Naive thymus-derived CD4-positive, alpha-beta T cell (primary cell): ENCODE measurements at regions of chr6 and their contacts with region 1.

Region 1: GRCh38 chr6:127775371-127775770 is 125.5 kb downstream of the THEMIS start:
- DNase-seq: no peak
- ATAC-seq: no peak
- H3K4me3 ChIP-seq: no peak overlapping the region
- H3K4me3 Mint-ChIP-seq: no peak overlapping the region
- H3K27ac ChIP-seq: no peak overlapping the region
- H3K27ac Mint-ChIP-seq: peak overlapping the region in 4 of 9 donors; percentile 55 to 66 (median 64)
- H3K4me1 ChIP-seq: peaks cover 0 to 8% of the 10 kb centered on the region in 2 donors
- H3K4me1 Mint-ChIP-seq: peaks cover 17 to 70% (median 52%) of the 10 kb centered on the region in 7 donors
- H3K27me3 ChIP-seq: no peaks in the 10 kb centered on the region
- H3K27me3 Mint-ChIP-seq: no peaks in the 10 kb centered on the region

Region 2: GRCh38 chr6:127762284-127762683 is 13.1 kb before region 1 on chr6:
- CTCF ChIA-PET with region 1: no interaction called
- POLR2A ChIA-PET with region 1: no interaction called
- intact Hi-C with region 1: loop called in 1 of 2 experiments (anchors 2 kb)
- DNase-seq: peak in 3 of 9 donors; percentile 9 to 19 (median 12)
- ATAC-seq: no peak
- H3K4me3 ChIP-seq: no peak overlapping the region
- H3K4me3 Mint-ChIP-seq: peak overlapping the region in 4 of 10 donors; percentile 20 to 52 (median 33)
- H3K27ac ChIP-seq: no peak overlapping the region
- H3K27ac Mint-ChIP-seq: peak overlapping the region in 7 of 9 donors; percentile 12 to 76 (median 46)
- H3K4me1 ChIP-seq: peaks cover 12 to 22% of the 10 kb centered on the region in 2 donors
- H3K4me1 Mint-ChIP-seq: peaks cover 23 to 71% (median 64%) of the 10 kb centered on the region in 7 donors
- H3K27me3 ChIP-seq: no peaks in the 10 kb centered on the region
- H3K27me3 Mint-ChIP-seq: no peaks in the 10 kb centered on the region

Region 3: DNA sequence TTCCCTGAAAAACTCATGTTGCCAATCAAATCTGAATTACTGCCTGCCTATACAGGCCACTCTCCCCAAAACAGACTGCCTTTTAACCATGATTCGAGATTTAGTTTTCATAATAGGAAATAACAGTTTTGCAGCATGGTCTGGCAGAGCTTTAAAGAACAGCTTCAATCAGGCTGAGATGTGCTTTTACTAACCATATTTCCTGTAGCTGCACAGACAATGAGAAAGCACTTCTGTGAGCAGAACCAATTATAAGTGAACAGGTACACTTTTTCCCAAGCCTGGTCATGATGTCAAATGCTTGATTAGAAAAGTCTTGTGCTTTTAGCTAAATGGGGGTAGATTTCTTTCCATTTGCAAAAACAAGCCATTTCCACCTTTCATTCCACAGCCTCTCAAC is 17.2 kb after region 1 on chr6:
- CTCF ChIA-PET with region 1: interaction called, 3 read pairs
- POLR2A ChIA-PET with region 1: interaction called, 4 read pairs
- intact Hi-C with region 1: loop called in 1 of 2 experiments (anchors 2 kb)
- DNase-seq: peak in 7 of 9 donors; percentile 44 to 70 (median 60)
- ATAC-seq: peak; percentile 83
- H3K4me3 ChIP-seq: peak overlapping the region; percentile 3
- H3K4me3 Mint-ChIP-seq: peak overlapping the region in 8 of 10 donors; percentile 14 to 80 (median 54)
- H3K27ac ChIP-seq: peak overlapping the region; percentile 43
- H3K27ac Mint-ChIP-seq: peak overlapping the region in 8 of 9 donors; percentile 22 to 90 (median 78)
- H3K4me1 ChIP-seq: peaks cover 34 to 43% of the 10 kb centered on the region in 2 donors
- H3K4me1 Mint-ChIP-seq: peaks cover 45 to 100% (median 92%) of the 10 kb centered on the region in 7 donors
- H3K27me3 ChIP-seq: no peaks in the 10 kb centered on the region
- H3K27me3 Mint-ChIP-seq: no peaks in the 10 kb centered on the region